Thyroid gland (tissue), 4 donors: ENCODE measurements at regions of chr3 and their contacts with region 1.

Region 1: GRCh38 chr3:119098619-119099222 is 47.2 kb upstream of the TEX55 start:
- DNase-seq: no peak
- H3K4me3 ChIP-seq: no peak overlapping the region
- H3K27ac ChIP-seq: no peak overlapping the region
- H3K4me1 ChIP-seq: no peaks in the 10 kb centered on the region
- H3K27me3 ChIP-seq: no peaks in the 10 kb centered on the region
- CTCF ChIP-seq: peak in 5 of 6 experiments; percentile 26 to 76 (median 74)
- POLR2A ChIP-seq: no peak

Region 2: DNA sequence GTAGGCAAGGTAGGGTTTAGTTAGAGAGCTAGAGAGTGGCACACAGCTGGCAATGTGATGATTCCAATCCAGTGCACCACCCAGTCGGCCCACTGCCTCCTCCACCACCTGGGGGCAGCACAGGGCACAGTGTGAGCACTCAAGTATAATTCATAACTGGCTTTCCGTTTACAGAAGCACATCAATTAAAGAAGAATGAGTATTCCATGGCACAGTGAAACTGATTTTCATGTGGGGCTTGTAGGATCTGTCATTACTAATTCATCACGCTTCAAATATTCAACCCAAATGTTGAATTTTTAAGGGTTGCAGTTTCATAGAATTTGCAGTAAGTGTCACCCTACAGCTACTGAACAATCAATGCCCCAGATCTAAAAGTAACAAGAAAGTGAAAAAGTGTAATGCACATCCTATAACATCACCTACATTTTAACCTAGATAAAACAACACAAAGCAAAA is 213.9 kb before region 1 on chr3:
- intact Hi-C with region 1: loop called (anchors 5 kb)
- DNase-seq: peak; percentile 64 to 78
- H3K4me3 ChIP-seq: no peak overlapping the region
- H3K27ac ChIP-seq: no peak overlapping the region
- H3K4me1 ChIP-seq: no peaks in the 10 kb centered on the region
- H3K27me3 ChIP-seq: no peaks in the 10 kb centered on the region
- CTCF ChIP-seq: peak; percentile 27 to 84 (median 52)
- POLR2A ChIP-seq: no peak

Region 3: GRCh38 chr3:119034256-119035013 is 64.3 kb before region 1 on chr3 and contains the start of gene IGSF11:
- intact Hi-C with region 1: no loop called
- DNase-seq: peak; percentile 81 to 83
- H3K4me3 ChIP-seq: peak within 1 kb of the TSS; percentile 35 to 44 (median 36)
- H3K27ac ChIP-seq: peak within 1 kb of the TSS in 2 of 3 donors; percentile 9 to 26
- H3K4me1 ChIP-seq: peaks cover 3 to 5% of the 10 kb centered on the region in 2 donors
- H3K27me3 ChIP-seq: no peaks in the 10 kb centered on the region
- CTCF ChIP-seq: peak in 3 of 6 experiments; percentile 55 to 83 (median 76)
- POLR2A ChIP-seq: peak in 1 of 2 donors; percentile 56
- total RNA-seq, gene IGSF11: 0.29 to 1.4 (median 0.75) TPM